ENCODE measurements at regions of chr1 and their contacts with region 1.

Region 1: GRCh38 chr1:36576118-36576517 is 93.4 kb upstream of the CSF3R start:
- DNase-seq: peak; percentile 49 to 93
- H3K4me3 ChIP-seq: peak overlapping the region in 1 of 4 experiments; percentile 10; a peak in 1 of 8 replicates
- H3K27ac ChIP-seq: no peak overlapping the region
- H3K4me1 ChIP-seq: peaks cover 0 to 21% (median 10%) of the 10 kb centered on the region in 4 experiments; a peak in 6 of 7 replicates
- H3K27me3 ChIP-seq: no peaks in the 10 kb centered on the region; a peak in 1 of 7 replicates
- CTCF ChIP-seq: peak; percentile 85 to 93 (median 90)
- EP300 ChIP-seq: no peak
- POLR2A ChIP-seq: no peak
- RAD21 ChIP-seq: peak; percentile 94 to 97

Region 2: GRCh38 chr1:36565576-36566501 is 10.3 kb before region 1 on chr1:
- CTCF ChIA-PET with region 1: interaction called, 125 read pairs
- POLR2A ChIA-PET with region 1: no interaction called
- DNase-seq: peak in 1 of 2 experiments; percentile 42
- H3K4me3 ChIP-seq: no peak overlapping the region
- H3K27ac ChIP-seq: no peak overlapping the region
- H3K4me1 ChIP-seq: peaks cover 0 to 4% (median 0%) of the 10 kb centered on the region in 4 experiments; a peak in 2 of 7 replicates
- H3K27me3 ChIP-seq: no peaks in the 10 kb centered on the region; a peak in 2 of 7 replicates
- CTCF ChIP-seq: no peak
- EP300 ChIP-seq: no peak
- POLR2A ChIP-seq: no peak
- RAD21 ChIP-seq: no peak

Region 3: GRCh38 chr1:36599828-36600227 is 23.7 kb after region 1 on chr1:
- CTCF ChIA-PET with region 1: interaction called, 42 read pairs
- POLR2A ChIA-PET with region 1: no interaction called
- DNase-seq: no peak
- H3K4me3 ChIP-seq: no peak overlapping the region
- H3K27ac ChIP-seq: no peak overlapping the region
- H3K4me1 ChIP-seq: no peaks in the 10 kb centered on the region; a peak in 1 of 7 replicates
- H3K27me3 ChIP-seq: no peaks in the 10 kb centered on the region
- CTCF ChIP-seq: no peak
- EP300 ChIP-seq: no peak
- POLR2A ChIP-seq: no peak
- RAD21 ChIP-seq: no peak

Region 4: DNA sequence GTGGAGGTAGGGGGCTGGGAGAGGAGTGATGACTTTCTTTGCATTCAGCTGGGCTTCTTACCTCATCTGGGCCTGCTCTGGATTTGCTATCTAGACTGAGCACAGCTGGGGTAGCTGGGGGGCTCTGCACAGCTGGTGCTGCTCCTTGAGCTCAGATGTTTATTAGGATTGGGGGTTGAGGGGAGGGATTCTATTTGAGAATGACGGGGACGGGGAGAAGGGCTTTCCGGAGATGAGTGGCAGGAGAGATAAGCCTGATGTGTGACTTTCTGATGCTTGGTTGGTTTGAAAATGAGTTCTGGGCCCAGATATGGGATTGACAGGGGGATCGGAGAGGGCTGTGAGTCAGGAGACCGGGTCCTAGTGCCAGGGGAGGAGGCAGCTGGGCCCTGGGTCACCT is 52.7 kb after region 1 on chr1:
- CTCF ChIA-PET with region 1: interaction called, 11 read pairs
- POLR2A ChIA-PET with region 1: no interaction called
- DNase-seq: no peak
- H3K4me3 ChIP-seq: no peak overlapping the region
- H3K27ac ChIP-seq: no peak overlapping the region
- H3K4me1 ChIP-seq: peaks cover 0 to 7% (median 6%) of the 10 kb centered on the region in 4 experiments; a peak in 6 of 7 replicates
- H3K27me3 ChIP-seq: 0 out of 7 replicates have a peak, but pooled peaks cover 0 to 2% (median 0%) of the 10 kb centered on the region in 4 experiments
- CTCF ChIP-seq: no peak
- EP300 ChIP-seq: no peak
- POLR2A ChIP-seq: no peak
- RAD21 ChIP-seq: no peak

Region 5: GRCh38 chr1:36871146-36871981 is 295.2 kb after region 1 on chr1:
- CTCF ChIA-PET with region 1: interaction called, 11 read pairs
- POLR2A ChIA-PET with region 1: no interaction called
- DNase-seq: no peak
- H3K4me3 ChIP-seq: no peak overlapping the region
- H3K27ac ChIP-seq: no peak overlapping the region
- H3K4me1 ChIP-seq: no peaks in the 10 kb centered on the region; a peak in 1 of 7 replicates
- H3K27me3 ChIP-seq: no peaks in the 10 kb centered on the region
- CTCF ChIP-seq: no peak
- EP300 ChIP-seq: no peak
- POLR2A ChIP-seq: no peak
- RAD21 ChIP-seq: no peak

Measured in H1 (cell line).